CD8-positive, alpha-beta memory T cell (primary cell): ENCODE measurements at regions of chr19 and their contacts with region 1.

Region 1: GRCh38 chr19:10580979-10581631 is 6.0 kb downstream of the AP1M2 start:
- DNase-seq: peak; percentile 80 to 91 (median 82)
- H3K4me3 ChIP-seq: no peak overlapping the region
- H3K4me3 Mint-ChIP-seq: peak overlapping the region in 3 of 7 donors; percentile 4 to 23 (median 13)
- H3K27ac ChIP-seq: no peak overlapping the region
- H3K27ac Mint-ChIP-seq: peak overlapping the region in 3 of 8 donors; percentile 18 to 82 (median 44)
- H3K4me1 ChIP-seq: peaks cover 5% of the 10 kb centered on the region
- H3K4me1 Mint-ChIP-seq: peaks cover 15 to 26% (median 18%) of the 10 kb centered on the region in 3 donors
- H3K27me3 ChIP-seq: no peaks in the 10 kb centered on the region
- H3K27me3 Mint-ChIP-seq: peaks cover 3 to 5% of the 10 kb centered on the region in 2 donors

Region 2: GRCh38 chr19:10289167-10289835 is 291.8 kb before region 1 on chr19:
- CTCF ChIA-PET with region 1: no interaction called
- POLR2A ChIA-PET with region 1: no interaction called
- DNase-seq: peak; percentile 52 to 78 (median 63)
- H3K4me3 ChIP-seq: peak overlapping the region; percentile 42
- H3K4me3 Mint-ChIP-seq: peak overlapping the region; percentile 76 to 88 (median 82)
- H3K27ac ChIP-seq: peak overlapping the region; percentile 69
- H3K27ac Mint-ChIP-seq: peak overlapping the region in 7 of 8 donors; percentile 42 to 87 (median 74)
- H3K4me1 ChIP-seq: peaks cover 77% of the 10 kb centered on the region
- H3K4me1 Mint-ChIP-seq: peaks cover 65 to 76% (median 75%) of the 10 kb centered on the region in 3 donors
- H3K27me3 ChIP-seq: peaks cover 53% of the 10 kb centered on the region
- H3K27me3 Mint-ChIP-seq: peaks cover 53 to 57% of the 10 kb centered on the region in 2 donors

Region 3: GRCh38 chr19:10593820-10594637 is 12.9 kb after region 1 on chr19:
- CTCF ChIA-PET with region 1: interaction called, 76 read pairs
- POLR2A ChIA-PET with region 1: interaction called, 3 read pairs
- DNase-seq: no peak
- H3K4me3 ChIP-seq: no peak overlapping the region
- H3K4me3 Mint-ChIP-seq: peak overlapping the region in 1 of 7 donors; percentile 42
- H3K27ac ChIP-seq: no peak overlapping the region
- H3K27ac Mint-ChIP-seq: peak overlapping the region in 1 of 8 donors; percentile 68
- H3K4me1 ChIP-seq: peaks cover 16% of the 10 kb centered on the region
- H3K4me1 Mint-ChIP-seq: peaks cover 24 to 26% (median 25%) of the 10 kb centered on the region in 3 donors
- H3K27me3 ChIP-seq: no peaks in the 10 kb centered on the region
- H3K27me3 Mint-ChIP-seq: no peaks in the 10 kb centered on the region

Region 4: DNA sequence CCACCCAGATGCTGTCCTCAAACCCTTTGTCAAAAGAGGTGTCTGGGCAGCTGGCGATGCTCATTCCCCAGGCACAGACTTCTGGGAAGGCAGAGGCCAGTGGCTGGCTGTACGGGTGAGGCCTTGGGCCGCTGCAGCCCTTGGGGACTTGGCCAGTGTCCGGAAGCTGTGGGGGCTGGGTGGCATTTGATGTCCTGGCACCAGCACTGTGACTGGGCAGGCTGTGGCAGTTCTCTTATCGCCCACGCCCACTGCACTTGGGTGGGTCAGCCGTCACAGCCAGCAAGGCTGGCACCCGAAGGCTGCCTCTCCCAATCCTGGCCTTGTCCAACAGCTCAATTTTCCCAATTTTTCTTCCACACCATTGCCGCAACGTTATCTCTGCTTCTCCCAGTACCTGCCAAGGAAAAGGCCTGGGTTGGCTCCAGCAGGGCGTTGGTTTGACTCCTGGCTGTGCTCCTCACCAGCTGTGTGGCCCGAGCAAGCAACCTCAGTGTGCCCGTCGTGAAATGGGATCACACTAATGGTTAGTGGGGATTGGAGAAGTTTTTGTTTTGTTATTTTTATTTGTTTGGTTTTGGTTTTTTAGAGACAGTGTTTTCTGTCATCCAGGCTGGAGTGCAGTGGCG is 31.5 kb after region 1 on chr19:
- CTCF ChIA-PET with region 1: interaction called, 18 read pairs
- POLR2A ChIA-PET with region 1: no interaction called
- DNase-seq: no peak
- H3K4me3 ChIP-seq: no peak overlapping the region
- H3K4me3 Mint-ChIP-seq: peak overlapping the region in 1 of 7 donors; percentile 66
- H3K27ac ChIP-seq: no peak overlapping the region
- H3K27ac Mint-ChIP-seq: peak overlapping the region in 3 of 8 donors; percentile 7 to 66 (median 60)
- H3K4me1 ChIP-seq: peaks cover 15% of the 10 kb centered on the region
- H3K4me1 Mint-ChIP-seq: peaks cover 29 to 52% (median 30%) of the 10 kb centered on the region in 3 donors
- H3K27me3 ChIP-seq: no peaks in the 10 kb centered on the region
- H3K27me3 Mint-ChIP-seq: peaks cover 0 to 3% of the 10 kb centered on the region in 2 donors

Region 5: DNA sequence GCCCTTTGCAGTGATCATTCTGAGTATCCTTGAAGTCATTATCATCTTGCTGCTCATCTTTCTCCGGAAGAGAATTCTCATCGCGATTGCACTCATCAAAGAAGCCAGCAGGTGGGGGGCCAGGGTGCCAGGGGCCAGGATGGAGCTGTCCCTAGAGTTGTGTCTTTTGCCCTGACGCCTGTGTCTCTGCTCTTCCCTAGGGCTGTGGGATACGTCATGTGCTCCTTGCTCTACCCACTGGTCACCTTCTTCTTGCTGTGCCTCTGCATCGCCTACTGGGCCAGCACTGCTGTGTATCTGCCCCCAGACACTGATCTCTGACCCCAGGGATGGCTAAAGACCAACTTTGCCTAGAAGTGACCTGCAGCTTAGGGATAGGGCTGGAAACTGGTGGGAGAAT is 53.9 kb after region 1 on chr19:
- CTCF ChIA-PET with region 1: interaction called, 371 read pairs
- POLR2A ChIA-PET with region 1: no interaction called
- DNase-seq: no peak
- H3K4me3 ChIP-seq: no peak overlapping the region
- H3K4me3 Mint-ChIP-seq: no peak overlapping the region
- H3K27ac ChIP-seq: no peak overlapping the region
- H3K27ac Mint-ChIP-seq: peak overlapping the region in 3 of 8 donors; percentile 10 to 94 (median 42)
- H3K4me1 ChIP-seq: no peaks in the 10 kb centered on the region
- H3K4me1 Mint-ChIP-seq: peaks cover 0 to 10% (median 8%) of the 10 kb centered on the region in 3 donors
- H3K27me3 ChIP-seq: no peaks in the 10 kb centered on the region
- H3K27me3 Mint-ChIP-seq: no peaks in the 10 kb centered on the region

Region 6: GRCh38 chr19:10653715-10654492 is 72.8 kb after region 1 on chr19 and contains the start of gene ILF3:
- CTCF ChIA-PET with region 1: interaction called, 371 read pairs
- POLR2A ChIA-PET with region 1: interaction called, 17 read pairs
- DNase-seq: peak; percentile 99 to 100 (median 100)
- H3K4me3 ChIP-seq: peak within 1 kb of the TSS; percentile 87
- H3K4me3 Mint-ChIP-seq: peak within 1 kb of the TSS; percentile 95 to 98 (median 95)
- H3K27ac ChIP-seq: peak within 1 kb of the TSS; percentile 99
- H3K27ac Mint-ChIP-seq: peak within 1 kb of the TSS; percentile 98 to 100 (median 99)
- H3K4me1 ChIP-seq: peaks cover 45% of the 10 kb centered on the region
- H3K4me1 Mint-ChIP-seq: peaks cover 38 to 55% (median 45%) of the 10 kb centered on the region in 3 donors
- H3K27me3 ChIP-seq: no peaks in the 10 kb centered on the region
- H3K27me3 Mint-ChIP-seq: peaks cover 0 to 10% of the 10 kb centered on the region in 2 donors
- total RNA-seq, gene ILF3: 471 to 475 TPM

Region 7: DNA sequence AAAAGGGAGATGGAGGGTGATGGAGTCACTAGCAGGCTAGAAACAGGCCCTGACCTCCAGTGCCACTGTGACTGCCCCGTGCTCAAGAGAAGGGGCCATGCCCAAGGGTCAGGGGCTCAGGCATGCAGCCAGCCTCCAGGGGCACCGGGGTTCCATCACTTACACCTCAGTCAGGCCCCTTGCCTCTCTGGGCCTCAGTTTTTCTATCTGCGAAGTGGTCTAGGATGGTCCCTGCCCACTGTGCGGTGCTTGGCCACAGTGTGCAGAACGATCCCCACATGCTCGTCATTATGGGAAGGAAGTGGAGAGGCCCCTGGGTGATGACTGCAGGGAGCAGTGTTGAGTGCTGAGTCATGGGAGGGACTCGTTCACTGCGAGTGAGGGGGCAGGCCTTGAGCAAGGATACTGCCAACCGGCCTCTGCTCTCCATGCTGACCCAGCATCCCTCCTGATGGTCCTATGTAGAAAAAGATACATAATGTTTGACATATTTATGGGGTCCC is 231.8 kb after region 1 on chr19:
- CTCF ChIA-PET with region 1: no interaction called
- POLR2A ChIA-PET with region 1: no interaction called
- DNase-seq: no peak
- H3K4me3 ChIP-seq: no peak overlapping the region
- H3K4me3 Mint-ChIP-seq: peak overlapping the region in 2 of 7 donors; percentile 14 to 28
- H3K27ac ChIP-seq: peak overlapping the region; percentile 31
- H3K27ac Mint-ChIP-seq: peak overlapping the region; percentile 75 to 95 (median 86)
- H3K4me1 ChIP-seq: peaks cover 19% of the 10 kb centered on the region
- H3K4me1 Mint-ChIP-seq: peaks cover 32 to 51% (median 40%) of the 10 kb centered on the region in 3 donors
- H3K27me3 ChIP-seq: no peaks in the 10 kb centered on the region
- H3K27me3 Mint-ChIP-seq: no peaks in the 10 kb centered on the region